ENCODE measurements at regions of chr9 and their contacts with region 1.

Region 1: DNA sequence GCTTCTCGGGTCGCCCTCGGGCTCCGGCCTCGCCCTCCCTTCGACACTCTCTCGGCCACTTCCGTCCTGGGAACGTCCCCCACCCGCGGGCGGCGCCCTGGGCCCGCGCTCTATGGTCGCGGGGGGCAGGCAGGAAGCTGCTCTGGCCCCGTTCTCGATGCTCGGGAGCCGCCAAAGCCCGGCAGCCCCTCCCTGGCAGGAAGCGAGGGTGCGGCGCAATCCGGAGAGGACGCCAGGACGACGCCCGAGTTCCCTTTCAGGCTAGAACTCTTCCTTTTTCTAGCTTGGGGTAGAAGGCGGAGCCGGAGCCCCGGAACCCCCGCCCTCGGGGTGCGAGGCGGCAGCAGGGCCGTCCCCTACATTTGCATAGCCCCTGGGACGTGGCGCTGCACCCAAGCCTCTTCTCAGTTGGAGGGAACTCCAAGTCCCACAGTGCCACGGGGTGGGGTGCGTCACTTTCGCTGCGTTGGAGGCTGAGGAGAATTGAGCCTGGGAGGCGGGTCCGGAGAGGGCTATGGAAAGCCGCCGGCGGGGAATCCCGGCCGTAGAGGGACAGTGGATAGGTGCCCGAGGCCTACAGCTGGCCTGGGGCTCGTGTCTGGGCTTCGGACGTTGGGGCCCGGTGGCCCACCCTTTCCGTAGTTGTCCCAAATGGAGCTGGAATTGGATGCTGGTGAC is at the starts of genes CREB3 and TLN1:
- DNase-seq: peak; percentile 96 to 98 (median 98)
- H3K4me3 ChIP-seq: peak within 1 kb of the TSS; percentile 84 to 95
- H3K4me3 Mint-ChIP-seq: peak within 1 kb of the TSS; percentile 89 to 97 (median 94)
- H3K27ac ChIP-seq: peak within 1 kb of the TSS; percentile 92
- H3K27ac Mint-ChIP-seq: peak within 1 kb of the TSS in 6 of 7 donors; percentile 94 to 97 (median 96)
- H3K4me1 ChIP-seq: peaks cover 66% of the 10 kb centered on the region
- H3K4me1 Mint-ChIP-seq: peaks cover 18 to 32% (median 24%) of the 10 kb centered on the region in 4 donors
- H3K27me3 ChIP-seq: no peaks in the 10 kb centered on the region
- H3K27me3 Mint-ChIP-seq: no peaks in the 10 kb centered on the region
- total RNA-seq, gene CREB3: 24.8 to 25.6 TPM
- total RNA-seq, gene TLN1: 294 to 316 TPM

Region 2: DNA sequence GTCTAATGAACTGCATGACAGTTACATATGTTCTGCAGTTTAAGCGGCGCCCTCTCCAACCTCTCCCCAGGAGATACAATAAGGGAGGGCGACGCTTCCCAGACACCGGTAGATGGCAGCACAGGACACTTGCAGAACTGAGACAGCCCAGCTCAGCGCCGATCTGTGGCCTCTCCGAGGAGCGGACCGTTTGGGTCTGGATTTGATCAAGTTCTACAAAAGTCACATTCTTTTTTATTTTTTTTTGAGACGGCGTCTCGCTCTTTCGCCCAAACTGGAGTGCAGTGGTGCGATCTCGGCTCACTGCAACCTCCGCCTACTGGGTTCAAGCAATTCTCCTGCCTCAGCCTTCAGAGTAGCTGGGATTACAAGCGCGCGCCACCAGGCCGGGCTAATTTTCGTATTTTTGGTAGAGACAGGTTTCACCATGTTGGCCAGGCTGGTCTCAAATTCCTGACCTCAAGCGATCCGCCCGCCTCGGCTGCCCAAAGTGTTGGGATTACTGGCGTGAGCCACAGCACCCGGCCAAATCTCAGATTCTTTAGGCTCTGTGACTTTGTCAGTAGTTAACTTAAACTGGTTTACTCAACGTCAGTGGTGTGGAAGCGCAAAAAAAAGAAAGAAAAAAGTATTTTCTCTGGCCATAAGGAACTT is 615.2 kb before region 1 on chr9:
- CTCF ChIA-PET with region 1: no interaction called
- POLR2A ChIA-PET with region 1: interaction called, 3 read pairs
- intact Hi-C with region 1: loop called (anchors 1 kb)
- DNase-seq: peak; percentile 86 to 91 (median 89)
- H3K4me3 ChIP-seq: peak overlapping the region; percentile 86 to 88
- H3K4me3 Mint-ChIP-seq: peak overlapping the region; percentile 89 to 95 (median 93)
- H3K27ac ChIP-seq: peak overlapping the region; percentile 68
- H3K27ac Mint-ChIP-seq: peak overlapping the region; percentile 92 to 99 (median 96)
- H3K4me1 ChIP-seq: peaks cover 42% of the 10 kb centered on the region
- H3K4me1 Mint-ChIP-seq: peaks cover 29 to 47% (median 35%) of the 10 kb centered on the region in 4 donors
- H3K27me3 ChIP-seq: no peaks in the 10 kb centered on the region
- H3K27me3 Mint-ChIP-seq: no peaks in the 10 kb centered on the region

Region 3: DNA sequence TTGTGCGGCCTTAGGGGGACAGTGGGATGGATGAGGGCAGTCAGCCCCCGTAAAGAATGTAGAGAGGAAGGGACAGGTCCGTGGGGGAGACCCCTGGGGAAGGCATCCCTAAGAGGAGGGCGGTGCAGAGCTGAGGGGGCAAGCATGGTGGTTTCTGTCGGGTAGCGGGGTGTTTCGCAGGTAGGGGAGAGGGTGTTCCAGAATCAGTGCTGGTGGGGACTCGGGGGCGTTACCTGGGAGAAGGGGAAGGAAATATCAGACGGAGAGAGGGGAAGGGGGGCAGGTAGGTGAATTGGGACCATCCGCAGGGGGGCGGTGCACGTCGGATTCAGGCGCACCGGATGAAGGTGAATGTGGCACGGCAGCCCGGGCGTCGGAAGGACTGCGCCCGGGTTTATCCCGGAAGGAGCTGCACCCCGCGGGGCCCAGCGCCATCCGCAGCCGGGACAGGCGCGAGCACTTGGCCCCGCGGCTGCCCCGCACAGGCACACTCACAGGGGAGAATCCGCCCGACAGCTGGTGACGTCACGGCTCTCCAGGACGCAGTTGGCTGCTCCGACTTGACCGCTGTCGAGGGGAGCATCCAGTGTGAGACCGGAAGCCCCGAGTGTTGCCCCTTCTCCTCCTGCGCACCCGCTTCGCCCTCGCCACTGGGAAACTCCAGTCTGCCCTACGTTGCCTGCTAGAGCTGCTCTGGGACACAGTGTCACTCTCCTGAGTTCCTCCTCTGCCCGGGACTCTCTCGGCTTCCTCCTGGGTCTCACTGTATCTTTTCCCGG is 115.4 kb before region 1 on chr9:
- CTCF ChIA-PET with region 1: interaction called, 53 read pairs
- POLR2A ChIA-PET with region 1: interaction called, 45 read pairs
- intact Hi-C with region 1: loop called (anchors 1 kb)
- DNase-seq: peak; percentile 63 to 75 (median 64)
- H3K4me3 ChIP-seq: peak overlapping the region; percentile 63 to 64
- H3K4me3 Mint-ChIP-seq: peak overlapping the region; percentile 84 to 91 (median 88)
- H3K27ac ChIP-seq: peak overlapping the region; percentile 60
- H3K27ac Mint-ChIP-seq: peak overlapping the region; percentile 89 to 95 (median 93)
- H3K4me1 ChIP-seq: peaks cover 36% of the 10 kb centered on the region
- H3K4me1 Mint-ChIP-seq: peaks cover 26 to 58% (median 35%) of the 10 kb centered on the region in 4 donors
- H3K27me3 ChIP-seq: no peaks in the 10 kb centered on the region
- H3K27me3 Mint-ChIP-seq: no peaks in the 10 kb centered on the region

Region 4: GRCh38 chr9:35664531-35665470 is 67.5 kb before region 1 on chr9 and contains the start of gene ARHGEF39:
- CTCF ChIA-PET with region 1: interaction called, 249 read pairs
- POLR2A ChIA-PET with region 1: interaction called, 162 read pairs
- intact Hi-C with region 1: no loop called
- DNase-seq: peak; percentile 64 to 72 (median 67)
- H3K4me3 ChIP-seq: peak within 1 kb of the TSS; percentile 42 to 51
- H3K4me3 Mint-ChIP-seq: peak within 1 kb of the TSS; percentile 83 to 91 (median 88)
- H3K27ac ChIP-seq: peak within 1 kb of the TSS; percentile 96
- H3K27ac Mint-ChIP-seq: peak within 1 kb of the TSS; percentile 82 to 100 (median 97)
- H3K4me1 ChIP-seq: peaks cover 56% of the 10 kb centered on the region
- H3K4me1 Mint-ChIP-seq: peaks cover 44 to 68% (median 56%) of the 10 kb centered on the region in 4 donors
- H3K27me3 ChIP-seq: no peaks in the 10 kb centered on the region
- H3K27me3 Mint-ChIP-seq: no peaks in the 10 kb centered on the region
- total RNA-seq, gene ARHGEF39: not detected

Region 5: DNA sequence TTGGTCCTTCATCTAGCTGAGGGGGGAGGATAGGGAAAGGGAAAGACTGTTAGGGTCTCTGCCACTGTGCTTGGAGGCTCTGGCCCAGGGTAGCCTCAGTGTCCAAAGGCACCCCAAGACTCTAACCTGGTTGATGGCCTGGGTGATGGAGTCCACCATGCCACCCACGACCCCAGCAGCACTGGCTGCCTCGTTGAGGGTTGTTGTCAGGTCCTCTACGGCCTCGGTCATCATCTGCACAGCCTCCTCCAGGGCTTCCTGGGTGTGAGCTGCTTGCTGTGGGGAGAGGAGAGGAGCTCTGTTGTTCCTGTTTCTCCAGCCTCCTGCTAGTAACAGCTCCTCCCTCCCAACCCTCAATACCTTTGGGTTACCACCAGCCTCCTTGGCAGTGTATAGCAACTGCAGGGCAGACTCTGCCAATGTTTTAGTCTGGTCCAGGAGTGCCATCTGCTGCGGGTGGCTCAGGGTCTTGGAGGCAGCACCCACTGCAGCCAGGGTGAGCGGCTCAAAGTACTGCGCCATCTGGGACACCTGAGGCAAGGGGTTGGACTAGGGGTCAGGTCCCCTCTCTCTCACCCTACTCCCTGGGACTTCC is 26.3 kb before region 1 on chr9:
- CTCF ChIA-PET with region 1: interaction called, 9 read pairs
- POLR2A ChIA-PET with region 1: interaction called, 14 read pairs
- intact Hi-C with region 1: no loop called
- DNase-seq: no peak
- H3K4me3 ChIP-seq: no peak overlapping the region
- H3K4me3 Mint-ChIP-seq: no peak overlapping the region
- H3K27ac ChIP-seq: no peak overlapping the region
- H3K27ac Mint-ChIP-seq: peak overlapping the region in 3 of 7 donors; percentile 29 to 73 (median 57)
- H3K4me1 ChIP-seq: no peaks in the 10 kb centered on the region
- H3K4me1 Mint-ChIP-seq: peaks cover 0 to 7% (median 1%) of the 10 kb centered on the region in 4 donors
- H3K27me3 ChIP-seq: no peaks in the 10 kb centered on the region
- H3K27me3 Mint-ChIP-seq: no peaks in the 10 kb centered on the region

Region 6: DNA sequence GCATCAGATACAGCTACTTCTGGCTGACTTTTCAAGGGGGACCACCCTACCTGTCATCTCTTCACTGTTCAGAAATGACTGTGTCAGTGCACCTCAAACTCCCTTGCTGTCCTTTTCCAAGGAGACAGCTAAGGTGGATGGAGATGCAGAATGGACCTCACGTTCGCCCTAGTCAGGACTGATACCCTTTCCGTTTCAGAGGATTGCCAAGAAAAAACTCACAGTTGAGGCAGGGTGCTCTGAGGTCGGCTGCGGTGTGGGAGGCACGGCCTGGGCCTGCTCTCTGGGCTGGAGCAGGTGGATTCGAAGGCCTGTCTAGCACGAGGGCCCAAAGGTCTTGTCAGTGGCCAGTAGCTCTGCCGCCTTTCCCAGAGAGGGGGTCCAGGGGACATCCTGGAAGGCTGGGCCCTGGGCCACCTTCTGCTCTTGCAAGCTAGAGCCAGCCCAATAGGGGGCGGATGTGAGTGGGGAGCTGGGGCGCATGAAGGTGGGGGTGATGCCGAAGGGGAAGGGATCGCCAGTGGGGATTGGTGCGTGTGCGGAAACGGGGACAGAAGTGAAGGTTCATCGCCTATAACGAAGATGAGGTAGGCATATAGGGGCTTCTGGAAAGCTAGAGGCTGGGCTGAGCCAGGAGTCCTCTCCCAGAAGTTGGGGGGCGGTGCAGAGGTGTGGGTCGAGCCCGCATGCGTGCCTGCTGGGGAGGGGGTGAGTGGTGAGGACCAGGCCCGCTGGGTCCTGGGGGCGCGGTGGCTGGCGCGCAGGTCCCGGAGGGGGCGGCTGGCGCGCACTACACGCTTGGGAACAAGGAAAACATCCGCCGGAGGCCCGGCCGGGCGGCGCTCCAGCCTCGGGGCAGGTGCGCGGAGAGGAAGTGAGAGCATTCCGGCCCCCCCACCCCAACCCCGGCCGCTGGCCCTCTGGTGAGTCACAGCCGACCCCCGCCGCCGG is 24.3 kb after region 1 on chr9:
- CTCF ChIA-PET with region 1: interaction called, 27 read pairs
- POLR2A ChIA-PET with region 1: interaction called, 25 read pairs
- intact Hi-C with region 1: loop called (anchors 2 kb)
- DNase-seq: peak; percentile 68 to 80 (median 71)
- H3K4me3 ChIP-seq: peak overlapping the region; percentile 62 to 90
- H3K4me3 Mint-ChIP-seq: peak overlapping the region; percentile 97 to 100 (median 98)
- H3K27ac ChIP-seq: peak overlapping the region; percentile 70
- H3K27ac Mint-ChIP-seq: peak overlapping the region; percentile 81 to 99 (median 98)
- H3K4me1 ChIP-seq: peaks cover 22% of the 10 kb centered on the region
- H3K4me1 Mint-ChIP-seq: peaks cover 24 to 67% (median 49%) of the 10 kb centered on the region in 4 donors
- H3K27me3 ChIP-seq: no peaks in the 10 kb centered on the region
- H3K27me3 Mint-ChIP-seq: no peaks in the 10 kb centered on the region

Region 7: GRCh38 chr9:35801328-35802128 is 69.3 kb after region 1 on chr9:
- CTCF ChIA-PET with region 1: no interaction called
- POLR2A ChIA-PET with region 1: no interaction called
- intact Hi-C with region 1: no loop called
- DNase-seq: no peak
- H3K4me3 ChIP-seq: no peak overlapping the region
- H3K4me3 Mint-ChIP-seq: no peak overlapping the region
- H3K27ac ChIP-seq: no peak overlapping the region
- H3K27ac Mint-ChIP-seq: peak overlapping the region in 3 of 7 donors; percentile 26 to 70 (median 31)
- H3K4me1 ChIP-seq: no peaks in the 10 kb centered on the region
- H3K4me1 Mint-ChIP-seq: peaks cover 0 to 4% (median 0%) of the 10 kb centered on the region in 4 donors
- H3K27me3 ChIP-seq: no peaks in the 10 kb centered on the region
- H3K27me3 Mint-ChIP-seq: no peaks in the 10 kb centered on the region

Region 8: GRCh38 chr9:35882263-35882848 is 150.1 kb after region 1 on chr9:
- CTCF ChIA-PET with region 1: interaction called, 18 read pairs
- POLR2A ChIA-PET with region 1: interaction called, 6 read pairs
- intact Hi-C with region 1: loop called (anchors 1 kb)
- DNase-seq: peak; percentile 70 to 75 (median 71)
- H3K4me3 ChIP-seq: no peak overlapping the region
- H3K4me3 Mint-ChIP-seq: no peak overlapping the region
- H3K27ac ChIP-seq: no peak overlapping the region
- H3K27ac Mint-ChIP-seq: no peak overlapping the region
- H3K4me1 ChIP-seq: no peaks in the 10 kb centered on the region
- H3K4me1 Mint-ChIP-seq: no peaks in the 10 kb centered on the region
- H3K27me3 ChIP-seq: no peaks in the 10 kb centered on the region
- H3K27me3 Mint-ChIP-seq: peaks cover 2 to 8% of the 10 kb centered on the region in 2 donors